ENCODE measurements at regions of chr1 and their contacts with region 1.

Region 1: GRCh38 chr1:53945433-53946251 is at the start of gene IFT25:
- DNase-seq: peak; percentile 100
- H3K4me3 ChIP-seq: peak within 1 kb of the TSS; percentile 72 to 90 (median 82)
- H3K27ac ChIP-seq: peak within 1 kb of the TSS; percentile 92 to 94 (median 94)
- H3K4me1 ChIP-seq: peaks cover 18 to 59% (median 55%) of the 10 kb centered on the region in 4 donors
- H3K27me3 ChIP-seq: no peaks in the 10 kb centered on the region
- CTCF ChIP-seq: no peak
- EP300 ChIP-seq: no peak
- POLR2A ChIP-seq: peak; percentile 54
- total RNA-seq, gene IFT25: 17.4 to 20.8 (median 17.6) TPM

Region 2: GRCh38 chr1:53715478-53715877 is 230.2 kb before region 1 on chr1:
- intact Hi-C with region 1: no loop called
- DNase-seq: no peak
- H3K4me3 ChIP-seq: no peak overlapping the region
- H3K27ac ChIP-seq: no peak overlapping the region
- H3K4me1 ChIP-seq: no peaks in the 10 kb centered on the region
- H3K27me3 ChIP-seq: peaks cover 0 to 45% (median 0%) of the 10 kb centered on the region in 4 donors
- CTCF ChIP-seq: no peak
- EP300 ChIP-seq: no peak
- POLR2A ChIP-seq: no peak

Region 3: DNA sequence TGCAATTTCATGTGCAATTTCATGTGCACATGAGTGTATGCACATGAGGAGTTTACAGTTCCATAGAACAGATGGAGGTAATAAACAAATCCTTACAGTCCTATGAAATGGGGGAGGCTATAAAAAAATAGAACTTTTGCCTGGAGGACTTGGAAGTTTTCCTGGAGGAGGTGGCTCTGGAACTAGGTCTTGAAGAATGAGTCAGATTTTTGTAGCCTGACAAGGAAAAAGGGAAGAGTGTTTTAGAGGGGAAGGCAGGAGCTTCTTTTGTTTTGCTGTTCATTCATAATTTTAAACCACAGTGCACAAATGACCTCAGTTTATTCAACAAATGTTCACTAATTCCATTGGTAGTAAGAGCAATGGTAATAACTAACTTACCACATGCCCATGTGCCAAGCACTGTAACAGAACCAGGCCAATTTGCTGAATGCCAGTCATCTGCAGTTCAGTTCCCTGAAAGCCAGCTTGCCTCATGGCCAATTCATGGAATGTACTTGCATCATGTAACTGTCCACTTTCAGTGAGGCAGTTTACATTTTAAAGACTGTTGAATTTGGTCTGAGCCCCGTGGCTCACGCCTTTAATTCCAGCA is 48.9 kb before region 1 on chr1:
- intact Hi-C with region 1: loop called (anchors 5 kb)
- DNase-seq: no peak
- H3K4me3 ChIP-seq: no peak overlapping the region
- H3K27ac ChIP-seq: peak overlapping the region; percentile 48 to 76 (median 72)
- H3K4me1 ChIP-seq: peaks cover 3 to 41% (median 39%) of the 10 kb centered on the region in 4 donors
- H3K27me3 ChIP-seq: no peaks in the 10 kb centered on the region
- CTCF ChIP-seq: no peak
- EP300 ChIP-seq: peak; percentile 66
- POLR2A ChIP-seq: no peak

Measured in esophagus muscularis mucosa (tissue), 4 donors.